ENCODE measurements at regions of chr17 and their contacts with region 1.

Region 1: DNA sequence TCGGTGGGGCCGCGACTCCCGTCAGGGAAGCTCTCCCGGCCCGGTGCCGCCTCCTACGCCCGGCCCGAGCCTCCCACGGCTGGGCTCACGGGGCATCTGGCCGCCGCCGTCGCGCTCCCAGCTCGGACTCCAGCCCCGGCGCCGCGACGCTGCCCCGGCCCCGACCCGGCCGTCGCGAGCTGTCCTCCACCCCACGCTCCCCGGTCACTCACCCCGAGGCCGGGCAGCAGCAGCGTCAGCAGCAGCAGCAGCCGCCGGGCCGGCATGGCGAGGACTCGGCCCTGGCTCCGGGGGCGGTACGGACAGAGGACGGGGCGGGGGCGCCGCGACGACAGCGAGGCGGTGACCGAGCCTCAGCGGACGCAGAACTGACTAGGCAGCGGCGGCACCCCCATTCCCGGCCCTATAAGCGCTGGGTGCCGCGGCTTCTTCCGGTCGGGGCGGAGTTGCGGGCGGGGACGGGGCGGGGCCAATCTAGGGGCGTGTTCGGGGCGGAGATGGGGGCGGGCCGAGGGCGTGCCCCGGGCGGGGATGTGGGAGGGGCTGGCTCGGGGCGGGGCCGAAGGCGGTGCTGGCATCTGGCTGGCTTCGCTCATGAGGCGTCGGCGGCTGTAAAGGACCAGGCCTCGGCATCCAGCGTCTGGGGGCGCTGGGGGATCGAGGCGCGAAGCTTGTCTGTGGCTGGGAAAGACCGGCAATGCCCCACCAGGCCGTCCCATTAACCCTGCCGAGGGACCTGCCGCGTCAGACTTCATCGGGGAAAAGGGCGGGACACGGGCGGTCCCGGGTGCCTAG is at the start of gene ERN1:
- DNase-seq: peak; percentile 92 to 94
- H3K4me3 ChIP-seq: peak within 1 kb of the TSS; percentile 51 to 67
- H3K27ac ChIP-seq: peak within 1 kb of the TSS; percentile 91 to 94
- H3K4me1 ChIP-seq: peaks cover 0 to 11% of the 10 kb centered on the region in 2 donors
- H3K27me3 ChIP-seq: no peaks in the 10 kb centered on the region
- CTCF ChIP-seq: peak in 1 of 4 experiments; percentile 22
- POLR2A ChIP-seq: peak; percentile 92
- total RNA-seq, gene ERN1: 4.4 to 56.5 (median 15.0) TPM

Region 2: DNA sequence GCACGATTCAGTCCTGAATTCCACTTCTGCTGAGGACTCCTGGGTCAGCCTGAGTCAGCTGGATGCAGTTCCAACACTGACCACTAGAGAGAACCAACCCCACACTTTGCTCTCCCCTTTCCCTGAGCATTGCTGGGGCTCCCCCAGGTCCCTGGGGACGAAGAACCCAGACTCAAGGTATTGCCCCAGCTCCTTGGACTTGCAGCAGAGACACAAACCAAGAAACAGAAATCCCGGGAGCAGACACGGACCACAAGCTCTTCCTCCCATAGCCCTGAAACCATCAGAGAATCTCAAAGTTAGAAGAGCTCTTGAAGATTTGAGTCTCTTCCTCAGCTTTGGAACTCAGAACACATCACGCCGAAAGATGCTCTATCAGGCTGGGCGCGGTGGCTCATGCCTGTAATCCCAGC is 210.6 kb before region 1 on chr17:
- intact Hi-C with region 1: loop called (anchors 10 kb)
- DNase-seq: peak; percentile 41
- H3K4me3 ChIP-seq: no peak overlapping the region
- H3K27ac ChIP-seq: no peak overlapping the region
- H3K4me1 ChIP-seq: no peaks in the 10 kb centered on the region
- H3K27me3 ChIP-seq: no peaks in the 10 kb centered on the region
- CTCF ChIP-seq: peak; percentile 77 to 91 (median 84)
- POLR2A ChIP-seq: no peak

Region 3: DNA sequence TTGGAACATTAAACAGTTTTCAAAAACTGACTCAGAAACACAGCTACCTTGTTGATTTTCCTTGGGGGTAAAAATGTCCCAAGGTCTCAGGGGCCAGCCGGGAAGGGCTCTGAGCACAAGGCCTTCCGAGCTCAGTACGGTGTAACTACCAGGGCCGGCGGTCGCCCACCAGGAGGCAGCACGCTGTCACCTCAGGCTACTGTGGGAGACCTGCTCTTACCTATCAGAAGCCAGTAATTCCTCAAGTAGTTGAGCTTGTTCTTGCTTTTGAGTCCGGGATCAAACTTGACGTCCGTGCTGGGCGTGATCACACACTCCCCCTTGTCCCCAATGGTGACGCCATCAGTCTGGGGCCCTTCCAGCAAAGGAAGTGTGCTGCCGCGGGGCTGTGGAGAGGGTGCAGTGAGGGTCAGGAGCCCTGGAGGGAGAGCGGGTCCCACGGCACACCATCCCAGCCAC is 66.2 kb before region 1 on chr17:
- intact Hi-C with region 1: loop called (anchors 10 kb)
- DNase-seq: peak; percentile 57 to 62
- H3K4me3 ChIP-seq: no peak overlapping the region
- H3K27ac ChIP-seq: peak overlapping the region in 1 of 2 donors; percentile 29
- H3K4me1 ChIP-seq: no peaks in the 10 kb centered on the region
- H3K27me3 ChIP-seq: no peaks in the 10 kb centered on the region
- CTCF ChIP-seq: peak; percentile 38 to 67 (median 46)
- POLR2A ChIP-seq: no peak

Measured in uterus (tissue), 4 donors.